Gastrocnemius medialis (tissue), 4 donors: ENCODE measurements at regions of chr1 and their contacts with region 1.

Region 1: DNA sequence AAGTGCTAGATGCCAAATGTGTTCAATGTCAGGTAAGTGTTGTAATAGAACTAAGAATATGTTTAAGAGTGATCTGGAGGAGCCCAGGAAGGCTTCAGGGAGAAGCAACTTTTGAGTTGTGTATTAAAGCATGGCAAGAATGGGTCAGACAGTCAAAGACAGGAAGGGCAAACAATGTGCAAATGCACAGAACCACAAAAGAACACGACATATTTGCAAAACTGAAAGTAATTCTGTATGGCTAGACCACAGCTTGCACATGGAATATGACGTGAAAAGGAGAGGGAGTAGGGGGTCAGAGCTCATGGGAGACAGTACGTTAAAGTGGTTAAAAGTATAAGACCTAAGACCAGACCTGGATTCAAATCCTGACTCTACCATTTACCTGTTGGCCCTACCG is 7.1 kb upstream of the SORT1 start:
- DNase-seq: no peak
- ATAC-seq: no peak
- H3K4me3 ChIP-seq: no peak overlapping the region
- H3K27ac ChIP-seq: peak overlapping the region; percentile 35 to 81 (median 68)
- H3K4me1 ChIP-seq: peaks cover 23 to 31% of the 10 kb centered on the region in 2 donors
- H3K27me3 ChIP-seq: no peaks in the 10 kb centered on the region
- CTCF ChIP-seq: no peak
- POLR2A ChIP-seq: no peak

Region 2: GRCh38 chr1:109263597-109264398 is 141.0 kb before region 1 on chr1:
- in situ Hi-C with region 1: loop called in 1 of 4 experiments (anchors 10 kb)
- intact Hi-C with region 1: no loop called
- DNase-seq: peak; percentile 52 to 76
- ATAC-seq: peak; percentile 59 to 78
- H3K4me3 ChIP-seq: no peak overlapping the region
- H3K27ac ChIP-seq: no peak overlapping the region
- H3K4me1 ChIP-seq: no peaks in the 10 kb centered on the region
- H3K27me3 ChIP-seq: no peaks in the 10 kb centered on the region
- CTCF ChIP-seq: peak; percentile 87 to 98 (median 93)
- POLR2A ChIP-seq: no peak

Region 3: DNA sequence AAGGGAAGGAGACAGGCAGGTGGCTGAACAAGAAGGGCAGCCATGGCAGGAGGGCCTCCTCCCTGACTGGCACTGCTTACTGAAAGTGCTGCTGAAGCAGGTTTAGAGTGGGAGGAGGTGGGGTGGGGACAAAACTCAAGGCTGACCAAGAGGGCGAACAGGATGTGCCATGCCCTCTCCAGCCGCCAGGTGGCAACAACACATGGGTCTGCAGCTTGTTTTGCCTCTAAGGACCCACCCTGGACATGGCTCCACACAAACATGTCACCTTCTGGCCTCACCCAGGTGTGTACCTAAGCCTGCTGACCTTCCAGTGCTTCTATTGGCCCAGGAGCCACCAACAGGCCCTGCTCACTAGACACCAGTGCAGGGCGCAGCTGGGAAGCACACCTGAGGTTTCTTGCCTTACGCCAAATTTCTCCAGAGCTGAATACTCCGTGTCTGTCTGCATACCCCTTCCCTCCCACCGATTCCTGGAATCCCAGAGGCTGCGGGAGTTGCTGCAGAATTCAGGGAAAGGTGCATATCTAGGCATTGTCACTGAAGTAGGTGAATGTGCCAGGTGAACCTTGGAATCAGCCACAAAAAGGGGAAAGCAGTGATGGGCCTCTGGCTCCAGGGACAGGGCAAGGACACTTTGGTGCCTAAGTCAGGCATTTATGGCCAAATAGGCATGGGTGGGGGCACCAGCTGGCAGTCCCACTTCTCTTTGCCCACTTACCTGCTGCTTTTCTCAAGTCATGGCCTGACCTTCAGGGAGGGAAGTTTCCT is 127.2 kb before region 1 on chr1:
- in situ Hi-C with region 1: loop called in 1 of 4 experiments (anchors 5 kb)
- intact Hi-C with region 1: no loop called
- DNase-seq: peak; percentile 42 to 75
- ATAC-seq: peak in 1 of 2 donors; percentile 53
- H3K4me3 ChIP-seq: no peak overlapping the region
- H3K27ac ChIP-seq: peak overlapping the region in 3 of 4 donors; percentile 21 to 62 (median 50)
- H3K4me1 ChIP-seq: peaks cover 14 to 33% of the 10 kb centered on the region in 2 donors
- H3K27me3 ChIP-seq: no peaks in the 10 kb centered on the region
- CTCF ChIP-seq: peak; percentile 85 to 93 (median 88)
- POLR2A ChIP-seq: no peak

Region 4: DNA sequence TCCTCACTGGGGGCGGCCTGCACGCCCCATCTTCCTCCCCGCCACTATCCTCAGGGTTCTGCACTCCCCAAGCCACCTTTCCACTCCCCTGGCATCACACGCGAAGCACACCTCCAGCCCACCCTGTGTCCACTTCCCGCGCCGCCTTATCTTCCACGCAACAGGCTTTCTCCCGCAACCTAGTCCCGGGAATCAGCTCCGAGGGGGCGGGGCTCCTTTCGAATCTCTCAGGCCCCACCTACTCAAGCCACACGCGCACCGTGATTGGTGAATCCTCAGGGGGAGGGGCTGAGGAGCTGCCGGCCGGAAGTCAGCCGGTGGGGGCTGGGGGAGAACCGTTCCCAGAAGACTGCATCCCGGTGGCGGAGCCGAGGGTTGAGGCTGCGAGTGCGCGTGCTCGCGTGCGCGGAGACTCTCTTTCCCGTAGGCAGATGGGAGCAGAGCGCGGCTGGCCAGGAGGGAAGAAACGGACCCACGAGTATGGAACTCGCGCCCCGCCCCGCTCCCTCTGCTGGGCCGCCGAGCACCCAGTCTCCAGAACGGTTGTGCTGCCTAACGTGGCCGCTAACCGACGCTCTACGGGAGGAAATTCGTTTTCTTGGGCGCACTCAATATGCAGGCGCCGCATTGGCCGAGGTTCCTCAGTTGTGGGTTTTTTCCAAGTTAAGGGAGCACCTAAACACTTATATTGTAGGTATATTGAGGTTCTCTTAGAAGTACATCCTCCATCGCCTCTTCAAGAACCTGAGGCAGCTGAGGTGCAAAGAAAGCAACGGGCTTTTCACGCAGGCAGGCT is 121.7 kb before region 1 on chr1 and contains the start of gene PSRC1:
- in situ Hi-C with region 1: loop called in 2 of 4 experiments (anchors 5 kb)
- intact Hi-C with region 1: no loop called
- DNase-seq: peak; percentile 95 to 96
- ATAC-seq: peak; percentile 94 to 98
- H3K4me3 ChIP-seq: peak within 1 kb of the TSS; percentile 64 to 72 (median 64)
- H3K27ac ChIP-seq: peak within 1 kb of the TSS; percentile 79 to 93 (median 86)
- H3K4me1 ChIP-seq: peaks cover 13 to 19% of the 10 kb centered on the region in 2 donors
- H3K27me3 ChIP-seq: no peaks in the 10 kb centered on the region
- CTCF ChIP-seq: peak in 4 of 5 experiments; percentile 43 to 71 (median 59)
- POLR2A ChIP-seq: peak; percentile 66 to 68
- total RNA-seq, gene PSRC1: 0.19 to 2.3 (median 0.84) TPM in 3 of 4 donors, not detected in the other

Region 5: DNA sequence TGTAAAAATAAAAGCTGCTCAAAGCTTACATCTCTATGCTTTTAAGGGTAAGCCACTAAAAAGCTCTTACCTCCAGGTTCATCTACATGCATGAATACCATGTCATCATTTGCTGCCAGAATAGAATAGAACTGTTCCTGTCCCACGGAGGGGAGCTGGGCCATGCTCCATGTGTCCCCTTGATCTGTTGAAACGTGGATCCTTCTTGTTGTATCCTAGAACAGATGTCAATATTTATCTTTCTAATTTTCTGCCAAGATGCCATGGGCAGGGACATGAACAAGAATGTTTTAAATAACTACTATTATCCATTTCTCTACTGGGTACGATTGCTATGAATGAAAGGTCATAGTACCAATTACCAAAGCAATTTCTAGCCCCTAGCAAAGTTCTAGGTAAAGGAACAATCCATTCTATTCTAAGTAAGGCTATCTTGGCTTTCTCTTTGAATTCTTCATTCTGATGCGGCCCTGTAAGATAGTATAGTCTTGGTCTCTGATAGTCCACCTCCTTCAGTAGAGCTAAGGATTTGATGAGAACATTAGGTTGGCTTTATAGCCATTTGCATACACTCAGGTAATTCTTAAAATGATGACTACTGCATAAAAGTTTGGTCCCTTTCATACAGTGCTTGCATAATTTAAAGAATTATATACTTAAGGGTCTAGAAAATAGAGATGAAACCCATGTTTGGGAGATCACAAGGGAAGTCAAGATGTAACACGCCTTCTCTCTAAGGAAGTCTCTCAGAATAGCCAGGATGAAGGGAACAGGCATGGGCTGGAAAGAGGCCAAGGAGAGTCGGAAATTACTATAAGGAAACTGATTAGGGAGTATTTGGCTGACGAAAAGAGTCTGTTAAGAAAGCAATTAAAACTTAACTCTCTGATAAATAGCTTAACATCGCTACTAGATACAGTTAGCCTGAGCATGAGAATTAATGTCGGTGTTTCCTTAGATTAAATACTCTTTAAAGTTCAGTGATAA is 62.6 kb before region 1 on chr1:
- in situ Hi-C with region 1: loop called in 1 of 4 experiments (anchors 10 kb)
- intact Hi-C with region 1: no loop called
- DNase-seq: no peak
- ATAC-seq: no peak
- H3K4me3 ChIP-seq: no peak overlapping the region
- H3K27ac ChIP-seq: peak overlapping the region in 2 of 4 donors; percentile 11 to 85
- H3K4me1 ChIP-seq: peaks cover 7 to 18% of the 10 kb centered on the region in 2 donors
- H3K27me3 ChIP-seq: no peaks in the 10 kb centered on the region
- CTCF ChIP-seq: no peak
- POLR2A ChIP-seq: no peak

Region 6: DNA sequence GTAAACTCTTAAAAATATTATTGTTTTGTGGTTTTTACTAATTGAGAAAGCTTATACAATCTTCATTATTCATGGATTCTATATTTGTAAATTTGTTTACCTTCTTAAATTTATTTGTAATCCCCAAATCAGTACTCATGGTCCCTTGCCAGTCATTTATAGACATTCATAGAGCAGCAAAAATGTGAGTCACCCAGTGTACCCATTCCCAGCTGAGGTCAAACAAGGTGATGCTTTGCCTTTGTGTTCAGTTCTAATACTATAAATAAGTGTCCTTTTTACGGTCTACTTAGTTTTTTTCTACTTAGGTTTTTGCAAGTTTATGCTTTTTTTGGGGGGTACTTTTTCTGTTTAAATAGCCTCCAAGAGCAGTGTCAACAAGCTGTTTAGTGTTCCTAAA is 43.2 kb before region 1 on chr1:
- in situ Hi-C with region 1: no loop called
- intact Hi-C with region 1: no loop called
- DNase-seq: no peak
- ATAC-seq: peak; percentile 77 to 85
- H3K4me3 ChIP-seq: no peak overlapping the region
- H3K27ac ChIP-seq: peak overlapping the region; percentile 14 to 93 (median 46)
- H3K4me1 ChIP-seq: peaks cover 51% of the 10 kb centered on the region in 2 donors
- H3K27me3 ChIP-seq: no peaks in the 10 kb centered on the region
- CTCF ChIP-seq: no peak
- POLR2A ChIP-seq: no peak

Region 7: GRCh38 chr1:109466452-109467300 is 61.8 kb after region 1 on chr1 and contains the start of gene SYPL2:
- in situ Hi-C with region 1: no loop called
- intact Hi-C with region 1: loop called (anchors 2 kb)
- DNase-seq: peak in 1 of 2 donors; percentile 83
- ATAC-seq: peak; percentile 61 to 71
- H3K4me3 ChIP-seq: peak within 1 kb of the TSS; percentile 66 to 96 (median 78)
- H3K27ac ChIP-seq: peak within 1 kb of the TSS; percentile 93 to 100 (median 97)
- H3K4me1 ChIP-seq: peaks cover 46 to 47% of the 10 kb centered on the region in 2 donors
- H3K27me3 ChIP-seq: no peaks in the 10 kb centered on the region
- CTCF ChIP-seq: peak in 3 of 5 experiments; percentile 8 to 14 (median 9)
- POLR2A ChIP-seq: peak; percentile 73 to 91
- total RNA-seq, gene SYPL2: 15.7 to 127 (median 83.7) TPM